PC-9 (cell line): ENCODE measurements at regions of chr5 and their contacts with region 1.

Region 1: DNA sequence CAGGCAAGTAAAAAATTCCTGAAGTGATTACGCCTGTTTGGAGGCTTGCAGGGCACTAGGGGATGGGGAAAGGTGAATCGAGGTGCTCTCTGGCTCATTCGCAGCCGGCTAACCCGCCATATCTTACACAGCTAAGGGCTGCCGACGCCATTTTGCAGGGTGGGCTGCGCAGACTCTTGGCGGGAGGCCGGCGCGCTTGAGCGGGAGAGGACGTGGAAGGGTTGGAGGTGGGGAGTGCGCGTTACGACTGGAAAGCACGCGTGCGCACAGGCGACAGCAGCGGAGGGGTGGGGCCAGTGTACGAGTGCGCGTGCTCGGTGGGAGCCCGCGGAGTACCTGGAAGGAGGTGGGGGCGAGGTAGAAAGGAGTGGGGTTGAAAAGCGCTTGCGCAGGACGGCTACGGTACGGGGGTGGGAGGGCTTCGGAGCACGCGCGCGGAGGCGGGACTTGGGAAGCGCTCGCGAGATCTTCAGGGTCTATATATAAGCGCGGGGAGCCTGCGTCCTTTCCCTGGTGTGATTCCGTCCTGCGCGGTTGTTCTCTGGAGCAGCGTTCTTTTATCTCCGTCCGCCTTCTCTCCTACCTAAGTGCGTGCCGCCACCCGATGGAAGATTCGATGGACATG is at the start of gene NPM1:
- DNase-seq: peak; percentile 90 to 99
- H3K4me3 ChIP-seq: peak within 1 kb of the TSS; percentile 85
- H3K27ac ChIP-seq: peak within 1 kb of the TSS; percentile 92
- H3K4me1 ChIP-seq: peaks cover 32% of the 10 kb centered on the region
- H3K27me3 ChIP-seq: no peaks in the 10 kb centered on the region
- CTCF ChIP-seq: no peak
- total RNA-seq, gene NPM1: 2,285 and 2,364 TPM in 2 replicates

Region 2: DNA sequence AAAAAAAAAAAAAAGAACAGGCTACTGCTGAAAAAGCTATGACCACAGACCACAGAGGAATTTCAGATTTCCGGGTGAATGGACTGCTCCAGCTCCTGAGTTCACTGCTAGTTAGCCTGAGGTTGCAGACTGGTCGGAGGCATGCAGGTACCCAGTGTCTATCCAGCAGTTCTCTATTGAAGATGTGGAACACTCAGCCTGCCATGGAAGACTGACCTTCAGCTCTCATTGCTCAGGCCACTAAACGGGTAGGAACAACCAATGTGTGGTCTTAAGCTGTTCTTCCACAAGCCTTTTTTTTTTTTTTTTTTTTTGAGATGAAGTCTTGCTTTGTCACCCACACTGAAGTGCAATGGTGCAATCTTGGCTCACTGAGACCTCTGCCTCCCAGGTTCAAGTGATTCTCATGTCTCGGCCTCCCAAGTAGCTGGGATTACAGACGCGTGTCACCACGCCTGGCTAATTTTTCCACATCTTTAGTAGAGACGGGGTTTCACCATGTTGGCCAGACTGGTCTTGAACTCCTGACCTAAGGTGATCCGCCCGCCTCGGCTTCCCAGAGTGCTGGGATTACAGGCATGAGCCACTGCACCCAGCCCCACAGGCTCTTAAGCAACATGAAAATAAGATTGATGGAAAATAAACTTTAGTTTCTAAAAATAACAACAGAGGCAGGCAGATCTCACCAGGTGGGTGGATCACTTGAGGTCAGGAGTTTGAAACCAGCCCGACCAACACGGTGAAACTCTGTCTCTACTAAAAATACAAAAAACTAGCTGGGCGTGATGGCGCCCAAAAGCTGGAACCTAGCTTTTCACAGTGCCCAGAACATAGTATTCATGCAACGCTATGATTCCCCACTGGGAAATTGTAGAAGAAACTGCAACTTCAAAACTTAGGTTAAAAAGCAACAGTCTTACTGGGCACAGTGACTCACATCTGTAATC is 19.8 kb before region 1 on chr5:
- CTCF ChIA-PET with region 1: interaction called, 4 read pairs
- POLR2A ChIA-PET with region 1: no interaction called
- intact Hi-C with region 1: loop called (anchors 2 kb)
- DNase-seq: peak; percentile 73 to 77
- H3K4me3 ChIP-seq: no peak overlapping the region
- H3K27ac ChIP-seq: no peak overlapping the region
- H3K4me1 ChIP-seq: peaks cover 8% of the 10 kb centered on the region
- H3K27me3 ChIP-seq: no peaks in the 10 kb centered on the region
- CTCF ChIP-seq: no peak